ENCODE measurements at regions of chr4 and their contacts with region 1.

Region 1: DNA sequence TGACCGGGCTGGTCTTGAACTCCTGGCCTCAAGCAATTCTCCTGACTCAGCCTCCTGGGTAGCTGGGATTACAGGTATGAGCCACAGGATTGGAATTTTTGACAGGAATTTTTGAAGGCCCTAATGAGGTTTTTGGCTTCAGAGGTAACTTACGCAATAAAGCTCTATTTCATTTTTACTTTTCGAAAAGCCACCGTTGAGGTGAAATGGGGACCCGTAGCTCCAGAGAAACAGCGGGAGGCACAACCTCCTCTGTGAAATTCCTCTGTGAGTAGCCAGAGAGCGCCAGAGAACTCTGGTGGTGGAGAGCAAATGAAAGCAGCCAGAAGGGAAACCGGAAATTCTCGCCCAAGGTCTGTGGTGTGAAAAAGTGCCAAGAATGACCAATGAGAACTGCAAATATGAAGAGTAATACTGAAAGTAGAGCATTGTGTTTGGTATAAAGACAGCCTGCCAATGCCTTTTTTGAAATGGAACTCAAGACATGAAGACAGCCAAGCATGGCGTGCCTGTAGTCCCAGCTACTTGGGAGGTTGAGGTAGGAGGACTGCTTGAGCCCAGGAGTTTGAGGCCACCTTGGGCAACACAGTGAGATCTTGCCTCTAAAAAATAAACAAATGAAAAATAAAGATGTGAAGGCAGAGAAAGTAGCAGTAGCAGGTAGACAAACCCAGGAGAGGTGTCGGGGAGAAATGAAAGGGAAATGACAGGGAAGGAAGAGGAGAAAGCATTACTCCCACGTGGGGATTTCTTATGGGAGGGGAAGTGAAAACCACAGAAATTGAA is 33.0 kb upstream of the TMEM131L start:
- DNase-seq: peak; percentile 86
- H3K4me3 Mint-ChIP-seq: peak overlapping the region; percentile 78
- H3K27ac Mint-ChIP-seq: peak overlapping the region; percentile 90
- H3K4me1 Mint-ChIP-seq: peaks cover 44% of the 10 kb centered on the region
- H3K27me3 Mint-ChIP-seq: peaks cover 3% of the 10 kb centered on the region

Region 2: GRCh38 chr4:153488006-153488891 is 55.1 kb after region 1 on chr4:
- CTCF ChIA-PET with region 1: interaction called, 4 read pairs
- POLR2A ChIA-PET with region 1: interaction called, 14 read pairs
- DNase-seq: peak; percentile 65
- H3K4me3 Mint-ChIP-seq: peak overlapping the region; percentile 66
- H3K27ac Mint-ChIP-seq: peak overlapping the region; percentile 89
- H3K4me1 Mint-ChIP-seq: peaks cover 75% of the 10 kb centered on the region
- H3K27me3 Mint-ChIP-seq: no peaks in the 10 kb centered on the region

Region 3: DNA sequence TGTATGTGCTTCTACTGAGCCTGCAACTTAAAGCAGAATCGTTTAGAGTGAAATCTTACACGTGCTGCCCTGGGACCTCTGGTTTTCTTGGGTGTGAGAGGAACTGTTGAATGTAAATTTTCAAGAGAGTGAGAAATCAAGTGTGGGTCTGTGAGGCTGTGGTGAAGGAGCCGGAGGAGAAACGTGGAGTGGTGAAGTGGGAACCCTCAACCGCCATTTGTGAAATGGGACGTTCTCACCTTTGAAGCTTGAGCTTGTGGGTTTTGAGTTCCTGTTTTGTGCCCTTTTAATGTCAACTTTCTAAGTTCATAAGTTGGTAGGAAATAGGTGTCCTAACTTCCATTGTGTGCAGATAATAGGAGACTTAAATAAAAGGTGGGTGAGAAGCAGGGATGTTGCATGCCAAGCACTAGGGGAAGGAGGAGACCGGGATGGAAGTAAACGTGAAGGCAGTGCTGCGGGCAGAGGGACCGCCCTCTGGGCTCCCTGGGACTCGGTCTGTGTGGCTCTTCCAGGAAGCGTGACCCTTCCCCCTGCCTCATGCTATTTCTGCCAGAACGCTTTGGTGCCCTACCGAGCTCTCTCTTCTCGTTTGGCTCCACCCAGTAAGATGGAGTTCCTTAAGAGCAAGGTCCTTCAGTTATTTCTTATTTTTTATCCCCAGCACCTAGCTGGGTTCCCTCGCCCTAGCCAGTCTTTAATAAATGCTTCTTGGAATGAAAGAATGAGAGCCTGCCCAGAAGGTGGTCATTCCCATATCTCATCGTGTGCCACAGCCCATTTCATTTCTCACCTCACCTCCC is 89.0 kb after region 1 on chr4:
- CTCF ChIA-PET with region 1: interaction called, 10 read pairs
- POLR2A ChIA-PET with region 1: interaction called, 8 read pairs
- DNase-seq: peak; percentile 79
- H3K4me3 Mint-ChIP-seq: peak overlapping the region; percentile 54
- H3K27ac Mint-ChIP-seq: peak overlapping the region; percentile 91
- H3K4me1 Mint-ChIP-seq: peaks cover 88% of the 10 kb centered on the region
- H3K27me3 Mint-ChIP-seq: no peaks in the 10 kb centered on the region

Region 4: GRCh38 chr4:153573881-153574802 is 141.0 kb after region 1 on chr4:
- CTCF ChIA-PET with region 1: interaction called, 50 read pairs
- POLR2A ChIA-PET with region 1: interaction called, 16 read pairs
- DNase-seq: peak; percentile 77
- H3K4me3 Mint-ChIP-seq: no peak overlapping the region
- H3K27ac Mint-ChIP-seq: peak overlapping the region; percentile 9
- H3K4me1 Mint-ChIP-seq: peaks cover 31% of the 10 kb centered on the region
- H3K27me3 Mint-ChIP-seq: no peaks in the 10 kb centered on the region

Region 5: DNA sequence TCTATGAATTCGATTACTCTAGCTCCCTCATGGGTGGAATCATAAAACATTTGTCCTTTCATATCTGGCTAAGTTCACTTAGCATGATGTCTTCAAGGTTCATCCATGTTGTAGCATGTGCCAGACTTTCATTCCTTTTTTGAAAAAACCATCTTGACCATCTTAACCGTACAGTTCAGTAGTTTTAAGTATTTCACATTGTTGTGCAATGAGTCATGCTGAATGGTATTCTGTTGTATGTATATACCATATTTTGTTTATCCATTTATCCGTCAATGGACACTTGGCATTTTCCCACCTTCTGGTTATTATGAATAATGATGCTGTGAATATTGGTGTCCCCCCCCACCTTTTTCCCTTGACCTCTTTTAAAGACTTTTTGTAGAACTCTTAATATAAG is 178.5 kb after region 1 on chr4:
- CTCF ChIA-PET with region 1: no interaction called
- POLR2A ChIA-PET with region 1: no interaction called
- DNase-seq: no peak
- H3K4me3 Mint-ChIP-seq: no peak overlapping the region
- H3K27ac Mint-ChIP-seq: no peak overlapping the region
- H3K4me1 Mint-ChIP-seq: peaks cover 22% of the 10 kb centered on the region
- H3K27me3 Mint-ChIP-seq: no peaks in the 10 kb centered on the region

Region 6: DNA sequence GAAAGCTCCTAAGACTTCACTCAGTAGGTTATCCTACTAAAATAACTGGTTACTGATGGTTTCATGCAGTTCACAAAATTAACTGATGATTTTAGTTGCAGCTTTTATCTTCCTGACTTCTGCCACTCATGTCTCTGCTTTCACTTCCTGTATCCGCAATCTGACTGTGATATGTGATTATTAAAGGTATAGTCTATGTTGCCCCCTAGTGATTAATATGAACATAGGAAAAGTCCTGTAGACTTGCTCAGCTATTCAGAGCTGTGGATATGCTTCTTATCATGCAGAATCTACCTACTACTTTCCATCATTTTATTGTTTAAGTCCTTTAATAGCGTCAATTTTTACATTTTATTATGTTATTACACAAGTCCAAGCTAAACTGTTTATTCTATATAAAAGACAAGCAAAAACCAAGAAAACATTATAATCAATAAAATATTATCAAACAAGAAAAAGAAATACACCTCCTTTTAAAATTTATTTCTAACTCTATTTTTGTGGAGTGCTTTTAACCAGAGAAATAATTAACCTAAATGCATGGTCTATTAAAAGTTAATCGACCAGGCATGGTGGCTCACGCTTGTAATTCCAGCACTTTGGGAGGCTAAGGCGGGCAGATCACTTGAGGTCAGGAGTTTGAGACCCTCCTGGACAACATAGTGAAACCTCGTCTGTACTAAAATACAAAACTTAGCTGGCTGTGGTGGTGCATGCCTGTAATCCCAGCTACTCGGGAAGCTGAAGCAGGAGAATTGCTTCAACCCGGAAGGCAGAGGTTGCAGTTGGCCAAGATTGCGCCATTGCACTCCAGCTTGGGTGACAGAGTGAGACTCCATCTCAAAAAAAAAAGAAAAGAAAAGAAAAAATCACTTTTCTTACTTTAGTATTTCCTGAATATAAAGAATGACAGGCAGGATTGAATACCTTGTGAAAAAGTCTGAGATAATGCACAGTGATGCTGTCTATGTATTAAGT is 210.5 kb after region 1 on chr4:
- CTCF ChIA-PET with region 1: interaction called, 22 read pairs
- POLR2A ChIA-PET with region 1: interaction called, 4 read pairs
- DNase-seq: no peak
- H3K4me3 Mint-ChIP-seq: no peak overlapping the region
- H3K27ac Mint-ChIP-seq: no peak overlapping the region
- H3K4me1 Mint-ChIP-seq: peaks cover 9% of the 10 kb centered on the region
- H3K27me3 Mint-ChIP-seq: no peaks in the 10 kb centered on the region

Region 7: GRCh38 chr4:153649572-153649991 is 216.4 kb after region 1 on chr4:
- CTCF ChIA-PET with region 1: interaction called, 22 read pairs
- POLR2A ChIA-PET with region 1: interaction called, 5 read pairs
- DNase-seq: no peak
- H3K4me3 Mint-ChIP-seq: no peak overlapping the region
- H3K27ac Mint-ChIP-seq: no peak overlapping the region
- H3K4me1 Mint-ChIP-seq: peaks cover 31% of the 10 kb centered on the region
- H3K27me3 Mint-ChIP-seq: no peaks in the 10 kb centered on the region